Activated CD4-positive, alpha-beta memory T cell treated with anti-CD3 and anti-CD28 coated beads for 36 hours (primary cell): ENCODE measurements at regions of chr2 and their contacts with region 1.

Region 1: GRCh38 chr2:169824373-169825333 is at the start of gene METTL5:
- DNase-seq: peak; percentile 87
- H3K4me3 Mint-ChIP-seq: peak within 1 kb of the TSS; percentile 84
- H3K27ac Mint-ChIP-seq: peak within 1 kb of the TSS; percentile 78
- H3K4me1 Mint-ChIP-seq: peaks cover 55% of the 10 kb centered on the region
- H3K27me3 Mint-ChIP-seq: no peaks in the 10 kb centered on the region
- total RNA-seq, gene METTL5: 109 to 110 TPM

Region 2: GRCh38 chr2:169363560-169364150 is 461.0 kb before region 1 on chr2:
- CTCF ChIA-PET with region 1: no interaction called
- POLR2A ChIA-PET with region 1: no interaction called
- intact Hi-C with region 1: loop called (anchors 10 kb)
- DNase-seq: peak; percentile 66
- H3K4me3 Mint-ChIP-seq: peak overlapping the region; percentile 82
- H3K27ac Mint-ChIP-seq: no peak overlapping the region
- H3K4me1 Mint-ChIP-seq: peaks cover 33% of the 10 kb centered on the region
- H3K27me3 Mint-ChIP-seq: peaks cover 30% of the 10 kb centered on the region

Region 3: DNA sequence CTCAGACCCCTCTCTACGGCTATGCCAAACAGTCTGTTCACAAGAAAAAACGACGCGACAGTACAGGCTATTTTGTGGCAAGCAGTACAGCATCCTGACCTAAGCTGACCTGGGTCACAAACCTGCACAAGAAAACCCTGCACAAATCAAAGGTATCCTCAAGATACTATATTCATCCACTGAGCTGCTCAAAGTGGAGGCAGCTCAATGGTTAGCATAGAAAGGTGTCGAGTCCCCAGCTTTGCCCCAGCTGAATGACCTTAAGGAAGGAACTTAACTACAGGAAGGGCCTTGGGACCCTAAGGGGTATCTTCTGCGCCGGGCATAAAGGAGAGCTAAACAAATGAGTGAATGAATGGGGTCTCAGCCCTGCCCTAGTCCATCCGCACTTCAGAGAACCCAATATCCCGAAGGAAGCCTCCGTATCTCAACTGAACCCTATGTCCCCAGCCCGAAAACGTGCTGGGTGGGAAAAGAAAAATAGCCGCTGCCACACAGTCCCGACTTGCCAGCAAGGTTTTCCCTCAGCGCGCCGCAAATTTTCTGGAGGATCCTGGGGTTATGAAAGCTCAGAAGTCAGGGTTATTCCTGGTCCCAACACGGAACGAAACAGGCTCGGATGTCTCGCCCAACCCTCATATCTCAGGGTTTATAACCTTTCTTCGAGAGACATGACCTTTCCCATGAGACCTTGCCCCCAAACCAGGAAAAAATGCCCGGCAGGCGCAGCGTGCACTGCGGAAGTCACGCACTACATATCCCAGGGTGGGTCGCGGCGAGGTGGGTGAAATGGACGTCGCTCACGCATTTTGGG is 251.3 kb before region 1 on chr2 and contains the start of gene FASTKD1:
- CTCF ChIA-PET with region 1: interaction called, 6 read pairs
- POLR2A ChIA-PET with region 1: interaction called, 3 read pairs
- intact Hi-C with region 1: loop called (anchors 1 kb)
- DNase-seq: peak; percentile 93
- H3K4me3 Mint-ChIP-seq: peak within 1 kb of the TSS; percentile 100
- H3K27ac Mint-ChIP-seq: peak within 1 kb of the TSS; percentile 89
- H3K4me1 Mint-ChIP-seq: peaks cover 25% of the 10 kb centered on the region
- H3K27me3 Mint-ChIP-seq: no peaks in the 10 kb centered on the region
- total RNA-seq, gene FASTKD1: 41.6 to 47.6 TPM

Region 4: DNA sequence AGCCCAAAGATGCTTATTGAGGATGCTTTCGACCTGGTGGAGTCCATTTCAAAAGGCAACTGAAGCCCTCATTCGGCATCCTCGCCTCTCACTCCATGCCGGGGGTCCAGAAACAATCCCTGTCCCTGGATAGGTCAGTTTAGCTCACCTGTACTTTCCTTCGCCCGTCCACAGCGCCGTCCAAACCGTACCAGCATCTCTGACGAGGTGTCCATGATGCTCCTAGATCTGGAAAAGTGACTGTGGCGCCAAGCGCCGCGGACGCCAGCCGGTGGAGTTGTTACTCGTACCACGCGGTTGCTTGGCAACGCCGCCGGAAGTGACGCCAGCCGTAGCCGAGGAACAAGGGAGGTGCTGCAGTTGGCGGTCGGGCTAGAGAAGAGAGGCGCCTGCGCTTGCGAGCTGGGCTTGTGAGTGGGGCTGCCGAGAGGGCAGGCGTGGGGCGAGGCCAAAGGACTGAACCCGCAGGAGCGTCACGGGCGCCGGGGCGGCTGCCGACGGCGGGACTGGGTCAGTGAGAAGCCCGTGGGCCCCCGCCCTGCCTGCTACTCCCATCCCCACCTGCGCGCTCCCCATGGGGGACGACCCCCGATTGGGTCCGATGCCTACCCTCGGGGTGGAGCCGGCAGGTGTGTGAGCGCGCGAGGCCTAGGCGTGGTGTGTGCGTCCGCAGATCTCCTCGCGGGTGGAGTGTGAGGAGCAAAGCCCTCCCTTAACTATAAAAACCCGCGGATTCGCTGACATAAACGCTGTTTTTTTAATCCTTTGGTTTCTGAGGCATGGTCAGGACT is 130.3 kb before region 1 on chr2 and contains the starts of genes CFAP210 and PHOSPHO2:
- CTCF ChIA-PET with region 1: no interaction called
- POLR2A ChIA-PET with region 1: no interaction called
- intact Hi-C with region 1: loop called (anchors 5 kb)
- DNase-seq: peak; percentile 99
- H3K4me3 Mint-ChIP-seq: peak within 1 kb of the TSS; percentile 90
- H3K27ac Mint-ChIP-seq: peak within 1 kb of the TSS; percentile 68
- H3K4me1 Mint-ChIP-seq: peaks cover 16% of the 10 kb centered on the region
- H3K27me3 Mint-ChIP-seq: peaks cover 6% of the 10 kb centered on the region
- total RNA-seq, gene CFAP210: not detected
- total RNA-seq, gene PHOSPHO2: 2.6 to 3.4 TPM

Region 5: DNA sequence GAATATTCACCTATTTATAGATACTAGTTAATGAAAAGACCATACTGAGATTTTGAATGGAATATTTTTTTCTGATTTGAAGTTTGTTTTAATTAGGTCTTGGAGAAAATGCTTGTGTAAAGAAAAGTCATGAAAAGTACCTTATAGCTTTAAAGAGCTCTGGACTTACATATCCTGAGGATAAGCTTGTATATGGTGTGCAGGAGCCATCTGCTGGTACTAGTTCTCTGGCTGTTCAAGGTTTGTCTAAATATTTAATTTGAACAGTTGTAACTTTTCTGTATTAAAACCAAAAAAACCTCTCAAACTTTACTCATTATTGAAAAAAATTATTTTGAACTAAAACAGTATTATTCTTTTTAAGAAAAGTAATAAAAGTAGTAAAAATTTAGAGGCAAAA is 52.7 kb after region 1 on chr2:
- CTCF ChIA-PET with region 1: interaction called, 13 read pairs
- POLR2A ChIA-PET with region 1: interaction called, 3 read pairs
- intact Hi-C with region 1: loop called (anchors 2 kb)
- DNase-seq: no peak
- H3K4me3 Mint-ChIP-seq: no peak overlapping the region
- H3K27ac Mint-ChIP-seq: no peak overlapping the region
- H3K4me1 Mint-ChIP-seq: no peaks in the 10 kb centered on the region
- H3K27me3 Mint-ChIP-seq: no peaks in the 10 kb centered on the region

Region 6: DNA sequence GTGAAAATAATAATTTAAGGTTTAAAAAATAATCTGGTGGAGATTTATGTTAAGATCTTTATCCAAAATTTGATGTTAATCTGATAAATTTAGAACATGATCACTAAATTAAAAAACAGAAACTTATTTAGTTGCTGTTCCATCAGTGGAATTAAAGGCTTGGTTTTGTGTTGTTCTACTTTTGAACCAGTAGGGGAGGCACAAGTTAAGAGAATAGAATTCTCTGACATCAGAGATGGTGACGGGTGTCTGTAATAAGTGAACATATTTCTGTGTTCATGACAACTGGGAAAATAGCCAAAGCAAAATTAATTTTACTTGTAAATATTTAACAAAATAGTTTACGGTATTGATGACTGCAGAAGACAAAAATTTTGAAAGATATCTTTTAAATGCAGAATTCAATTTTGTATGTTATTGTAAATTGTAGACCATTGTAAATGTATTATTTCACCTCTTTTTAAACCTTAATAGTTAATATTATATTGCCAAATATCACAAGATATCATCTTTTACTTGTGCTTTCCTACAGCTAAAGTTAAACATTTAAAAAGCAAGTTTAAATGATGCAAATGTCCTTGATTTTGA is 108.6 kb after region 1 on chr2:
- CTCF ChIA-PET with region 1: interaction called, 6 read pairs
- POLR2A ChIA-PET with region 1: interaction called, 3 read pairs
- intact Hi-C with region 1: loop called (anchors 1 kb)
- DNase-seq: no peak
- H3K4me3 Mint-ChIP-seq: no peak overlapping the region
- H3K27ac Mint-ChIP-seq: no peak overlapping the region
- H3K4me1 Mint-ChIP-seq: no peaks in the 10 kb centered on the region
- H3K27me3 Mint-ChIP-seq: no peaks in the 10 kb centered on the region